H1 (cell line): ENCODE measurements at regions of chr3 and their contacts with region 1.

Region 1: DNA sequence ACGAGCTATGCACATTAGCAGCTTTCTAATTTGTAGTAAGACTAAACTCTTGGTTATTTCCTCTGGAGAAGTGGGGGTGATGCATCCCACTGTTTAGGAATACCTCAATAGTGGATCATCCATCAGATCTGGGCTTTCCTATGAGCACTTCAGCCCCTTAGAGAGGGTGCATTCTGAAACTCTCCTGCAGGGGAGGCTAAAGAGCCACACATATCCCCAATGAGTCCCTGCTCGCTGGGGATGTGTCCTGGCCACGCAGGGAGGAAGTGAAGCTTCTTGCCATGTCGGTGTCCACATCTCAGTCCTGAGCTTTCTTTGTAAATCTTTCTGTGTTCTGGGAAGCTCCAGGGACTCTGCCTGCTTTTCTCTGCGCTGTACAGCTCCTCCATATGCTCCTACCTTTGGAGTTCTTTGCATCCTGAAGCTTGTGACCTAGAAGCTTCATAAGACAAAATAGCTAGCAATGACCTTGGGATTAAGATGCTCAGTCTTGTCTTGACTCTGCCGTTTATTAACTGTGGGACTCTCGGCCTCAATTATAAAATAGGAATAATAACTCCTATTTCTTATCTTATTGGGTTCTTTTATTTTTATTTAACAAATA is 28.3 kb upstream of the MASP1 start:
- DNase-seq: peak; percentile 72 to 94
- H3K4me3 ChIP-seq: no peak overlapping the region
- H3K27ac ChIP-seq: no peak overlapping the region
- H3K4me1 ChIP-seq: peaks cover 0 to 4% (median 2%) of the 10 kb centered on the region in 4 experiments; a peak in 4 of 7 replicates
- H3K27me3 ChIP-seq: no peaks in the 10 kb centered on the region; a peak in 1 of 7 replicates
- CTCF ChIP-seq: peak; percentile 76 to 97 (median 95)
- EP300 ChIP-seq: no peak
- POLR2A ChIP-seq: no peak
- RAD21 ChIP-seq: peak; percentile 99 to 100

Region 2: GRCh38 chr3:187112934-187113793 is 206.6 kb before region 1 on chr3:
- CTCF ChIA-PET with region 1: interaction called, 15 read pairs
- POLR2A ChIA-PET with region 1: no interaction called
- DNase-seq: no peak
- H3K4me3 ChIP-seq: no peak overlapping the region
- H3K27ac ChIP-seq: no peak overlapping the region
- H3K4me1 ChIP-seq: no peaks in the 10 kb centered on the region
- H3K27me3 ChIP-seq: no peaks in the 10 kb centered on the region
- CTCF ChIP-seq: peak in 2 of 3 experiments; percentile 38 to 42; a peak in 2 of 4 replicates
- EP300 ChIP-seq: no peak
- POLR2A ChIP-seq: no peak
- RAD21 ChIP-seq: peak; percentile 47 to 57

Region 3: GRCh38 chr3:187264021-187264420 is 55.8 kb before region 1 on chr3:
- CTCF ChIA-PET with region 1: interaction called, 63 read pairs
- POLR2A ChIA-PET with region 1: no interaction called
- DNase-seq: no peak
- H3K4me3 ChIP-seq: no peak overlapping the region
- H3K27ac ChIP-seq: no peak overlapping the region
- H3K4me1 ChIP-seq: no peaks in the 10 kb centered on the region
- H3K27me3 ChIP-seq: no peaks in the 10 kb centered on the region
- CTCF ChIP-seq: no peak
- EP300 ChIP-seq: no peak
- POLR2A ChIP-seq: no peak
- RAD21 ChIP-seq: no peak

Region 4: GRCh38 chr3:187343670-187344069 is 23.9 kb after region 1 on chr3:
- CTCF ChIA-PET with region 1: interaction called, 11 read pairs
- POLR2A ChIA-PET with region 1: no interaction called
- DNase-seq: no peak
- H3K4me3 ChIP-seq: no peak overlapping the region
- H3K27ac ChIP-seq: no peak overlapping the region
- H3K4me1 ChIP-seq: no peaks in the 10 kb centered on the region
- H3K27me3 ChIP-seq: no peaks in the 10 kb centered on the region
- CTCF ChIP-seq: no peak
- EP300 ChIP-seq: no peak
- POLR2A ChIP-seq: no peak
- RAD21 ChIP-seq: no peak

Region 5: DNA sequence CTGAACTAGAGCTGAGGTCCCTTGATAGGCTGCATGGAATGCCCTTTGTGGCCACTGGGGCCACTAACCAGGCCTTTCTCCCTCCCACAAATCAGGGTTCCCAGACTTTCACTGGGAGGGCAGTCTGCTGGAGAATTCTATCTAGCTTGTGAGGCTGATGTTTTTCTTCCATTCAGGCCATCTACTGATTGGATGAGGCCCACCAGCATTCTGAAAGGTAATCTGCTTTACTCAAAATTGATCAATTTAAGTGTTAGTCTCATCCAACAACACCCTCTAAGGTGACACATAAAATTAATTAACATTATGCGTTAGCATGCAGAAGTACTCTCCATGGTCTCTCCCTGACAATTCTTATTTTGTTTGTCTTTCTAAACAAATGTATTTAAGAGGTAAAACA is 128.9 kb after region 1 on chr3:
- CTCF ChIA-PET with region 1: interaction called, 23 read pairs
- POLR2A ChIA-PET with region 1: no interaction called
- DNase-seq: no peak
- H3K4me3 ChIP-seq: no peak overlapping the region
- H3K27ac ChIP-seq: no peak overlapping the region
- H3K4me1 ChIP-seq: peaks cover 0 to 13% (median 5%) of the 10 kb centered on the region in 4 experiments; a peak in 2 of 7 replicates
- H3K27me3 ChIP-seq: no peaks in the 10 kb centered on the region
- CTCF ChIP-seq: peak in 1 of 3 experiments; percentile 15; a peak in 1 of 4 replicates
- EP300 ChIP-seq: no peak
- POLR2A ChIP-seq: no peak
- RAD21 ChIP-seq: no peak

Region 6: GRCh38 chr3:187593332-187593850 is 273.6 kb after region 1 on chr3:
- CTCF ChIA-PET with region 1: interaction called, 23 read pairs
- POLR2A ChIA-PET with region 1: interaction called, 3 read pairs
- DNase-seq: no peak
- H3K4me3 ChIP-seq: no peak overlapping the region
- H3K27ac ChIP-seq: no peak overlapping the region
- H3K4me1 ChIP-seq: peaks cover 0 to 10% (median 4%) of the 10 kb centered on the region in 4 experiments; a peak in 3 of 7 replicates
- H3K27me3 ChIP-seq: no peaks in the 10 kb centered on the region
- CTCF ChIP-seq: no peak
- EP300 ChIP-seq: no peak
- POLR2A ChIP-seq: no peak
- RAD21 ChIP-seq: no peak

Region 7: GRCh38 chr3:187686621-187687273 is 366.9 kb after region 1 on chr3:
- CTCF ChIA-PET with region 1: interaction called, 947 read pairs
- POLR2A ChIA-PET with region 1: no interaction called
- DNase-seq: no peak
- H3K4me3 ChIP-seq: no peak overlapping the region
- H3K27ac ChIP-seq: no peak overlapping the region
- H3K4me1 ChIP-seq: no peaks in the 10 kb centered on the region
- H3K27me3 ChIP-seq: no peaks in the 10 kb centered on the region
- CTCF ChIP-seq: no peak
- EP300 ChIP-seq: no peak
- POLR2A ChIP-seq: no peak
- RAD21 ChIP-seq: no peak